ENCODE measurements at regions of chr14 and their contacts with region 1.

Region 1: DNA sequence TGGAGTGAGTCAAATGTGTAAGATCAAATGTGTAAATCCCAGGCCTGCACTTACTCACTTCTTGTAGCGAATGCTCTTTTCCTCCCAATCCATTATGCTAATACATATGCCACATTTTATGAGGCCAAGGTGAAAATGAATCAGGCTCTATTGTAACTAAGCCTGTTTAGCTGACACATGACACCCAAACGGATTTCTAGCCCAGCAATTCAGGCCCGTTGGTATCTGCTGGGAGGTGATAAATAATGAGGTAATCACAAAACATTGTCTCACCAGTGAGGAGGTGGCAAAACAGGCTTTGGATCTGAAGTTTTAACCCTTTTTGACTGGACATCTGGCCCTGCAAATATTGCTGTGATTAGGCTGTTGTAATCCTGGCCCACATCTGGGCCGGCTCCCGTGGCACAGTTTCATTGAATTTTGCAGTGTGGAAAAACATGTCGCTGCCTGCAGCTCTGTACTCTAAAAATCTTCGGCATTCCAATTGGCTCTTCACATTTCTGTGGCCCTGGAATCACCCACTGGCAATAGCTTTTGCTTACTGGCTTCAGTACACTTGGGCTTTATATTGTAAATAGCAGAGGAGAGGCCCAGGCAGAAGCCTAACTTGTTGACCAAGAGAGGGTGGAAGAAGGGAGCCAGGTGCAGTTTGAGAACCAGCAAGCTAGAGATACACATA is 106.1 kb downstream of the PAX9 start:
- DNase-seq: no peak
- ATAC-seq: peak in 1 of 4 donors; percentile 15
- H3K4me3 ChIP-seq: no peak overlapping the region
- H3K27ac ChIP-seq: no peak overlapping the region
- H3K4me1 ChIP-seq: no peaks in the 10 kb centered on the region
- H3K27me3 ChIP-seq: no peaks in the 10 kb centered on the region
- CTCF ChIP-seq: no peak

Region 2: DNA sequence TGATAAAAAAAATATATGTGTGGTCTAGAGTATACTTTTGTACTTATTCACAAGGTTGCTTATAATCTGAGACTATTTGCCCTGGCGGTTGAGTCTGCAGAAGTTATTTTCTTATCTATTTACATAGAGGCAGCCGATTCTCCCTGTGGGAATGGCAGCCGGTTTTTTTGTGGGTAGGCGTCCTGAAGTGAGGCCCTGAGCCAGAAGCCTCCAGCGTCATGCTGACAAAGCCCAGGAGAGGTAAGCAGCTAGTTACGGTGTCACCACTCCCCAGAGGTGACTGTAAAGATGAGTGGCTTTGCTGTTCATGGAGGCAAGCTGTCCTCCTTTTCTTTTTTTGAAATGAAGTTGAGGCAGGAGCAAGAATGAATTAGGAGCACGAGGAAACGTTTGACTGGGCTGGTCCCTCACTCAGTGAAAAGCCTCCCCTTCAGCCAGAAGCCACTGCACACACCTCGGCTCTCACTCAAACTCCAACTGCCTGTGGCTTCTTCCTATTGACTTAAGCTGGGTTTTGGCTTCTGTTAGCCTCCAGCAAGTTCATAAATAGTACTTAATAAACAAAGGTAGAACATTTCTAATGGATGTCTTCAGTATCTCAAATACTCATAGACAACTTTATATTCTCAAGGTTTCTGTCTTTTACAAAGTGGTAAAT is 84.5 kb before region 1 on chr14:
- intact Hi-C with region 1: loop called in 1 of 2 experiments (anchors 5 kb)
- DNase-seq: no peak
- ATAC-seq: no peak
- H3K4me3 ChIP-seq: no peak overlapping the region
- H3K27ac ChIP-seq: no peak overlapping the region
- H3K4me1 ChIP-seq: no peaks in the 10 kb centered on the region
- H3K27me3 ChIP-seq: no peaks in the 10 kb centered on the region
- CTCF ChIP-seq: no peak